Activated CD4-positive, alpha-beta memory T cell treated with anti-CD3 and anti-CD28 coated beads for 36 hours (primary cell): ENCODE measurements at regions of chr2 and their contacts with region 1.

Region 1: DNA sequence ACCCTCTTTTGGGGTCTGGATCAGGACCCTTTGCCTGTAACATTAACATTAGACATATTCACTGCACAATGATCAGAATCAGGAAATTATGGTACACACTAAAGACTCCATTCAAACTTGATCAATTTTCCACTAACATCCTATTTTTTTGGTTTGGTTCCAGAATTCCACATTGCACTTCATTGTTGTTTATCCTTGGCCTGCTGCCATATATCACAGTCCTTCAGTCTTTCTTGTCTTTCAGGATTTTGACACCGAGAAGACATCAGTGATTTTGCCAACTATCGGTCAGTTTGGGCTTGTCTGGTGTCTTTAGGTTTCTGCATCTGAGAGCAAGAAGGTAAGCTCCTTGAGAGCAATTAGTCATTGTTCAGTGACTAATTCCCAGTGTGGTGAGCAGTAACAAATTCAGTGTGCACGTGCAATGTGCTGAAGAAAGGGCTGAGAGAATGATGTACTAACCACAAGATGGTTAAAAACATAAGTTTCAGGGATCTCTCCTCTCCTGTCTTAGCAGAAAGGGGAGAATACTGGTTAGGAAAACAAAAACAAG is 23.5 kb downstream of the MARCHF4 start:
- DNase-seq: peak; percentile 52
- H3K4me3 Mint-ChIP-seq: no peak overlapping the region
- H3K27ac Mint-ChIP-seq: peak overlapping the region; percentile 36
- H3K4me1 Mint-ChIP-seq: peaks cover 66% of the 10 kb centered on the region
- H3K27me3 Mint-ChIP-seq: no peaks in the 10 kb centered on the region

Region 2: DNA sequence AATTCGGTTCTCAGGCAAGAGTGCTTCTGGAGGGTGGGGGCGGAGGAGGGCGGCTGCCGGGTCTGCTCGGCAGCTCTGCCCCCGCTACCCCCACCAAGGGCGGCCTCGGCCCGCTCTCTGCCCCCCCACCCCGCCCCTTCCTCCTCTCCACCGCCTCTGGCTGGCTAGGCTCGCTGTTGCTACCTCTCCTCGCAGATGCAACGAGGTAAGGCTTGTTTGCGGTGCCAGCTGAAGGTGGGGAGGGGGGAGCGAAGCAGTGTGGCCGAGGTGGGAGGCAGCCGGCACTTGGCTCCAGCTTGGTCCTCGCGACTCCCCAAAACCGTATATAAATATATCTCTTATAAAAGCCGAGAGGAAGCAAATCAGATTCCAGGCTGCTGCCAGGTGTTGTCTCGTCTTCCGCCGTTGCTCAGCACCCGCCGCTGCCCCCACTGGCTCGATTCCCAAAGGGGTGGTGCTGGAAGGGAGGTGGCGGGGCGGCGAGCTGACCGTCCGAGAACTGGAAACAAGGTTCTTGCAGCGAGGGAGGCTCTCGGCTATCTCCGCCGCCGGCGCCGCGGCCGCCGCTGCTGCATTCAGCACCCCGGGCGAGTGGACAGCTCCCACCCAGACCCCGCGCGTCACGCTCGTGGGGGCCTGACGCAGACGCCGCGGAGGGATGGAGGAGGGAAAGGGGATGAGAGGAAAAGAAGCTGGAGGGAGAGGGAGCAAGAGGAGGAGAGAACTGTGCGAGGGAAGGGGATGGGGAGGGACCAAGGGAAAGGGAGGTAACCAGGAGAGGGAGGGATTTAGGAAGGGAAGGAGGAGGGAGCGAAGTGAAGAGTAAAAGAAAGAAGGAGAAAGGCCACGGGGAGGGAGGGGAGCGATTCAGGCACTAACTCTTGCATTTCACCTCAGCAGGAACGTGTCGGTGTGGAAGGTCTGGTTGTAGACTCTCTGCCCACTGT is 23.2 kb after region 1 on chr2 and contains the start of gene MARCHF4:
- CTCF ChIA-PET with region 1: interaction called, 4 read pairs
- POLR2A ChIA-PET with region 1: no interaction called
- intact Hi-C with region 1: loop called (anchors 2 kb)
- DNase-seq: peak; percentile 75
- H3K4me3 Mint-ChIP-seq: no peak within 1 kb of the TSS
- H3K27ac Mint-ChIP-seq: no peak within 1 kb of the TSS
- H3K4me1 Mint-ChIP-seq: peaks cover 11% of the 10 kb centered on the region
- H3K27me3 Mint-ChIP-seq: peaks cover 48% of the 10 kb centered on the region
- total RNA-seq, gene MARCHF4: not detected

Region 3: DNA sequence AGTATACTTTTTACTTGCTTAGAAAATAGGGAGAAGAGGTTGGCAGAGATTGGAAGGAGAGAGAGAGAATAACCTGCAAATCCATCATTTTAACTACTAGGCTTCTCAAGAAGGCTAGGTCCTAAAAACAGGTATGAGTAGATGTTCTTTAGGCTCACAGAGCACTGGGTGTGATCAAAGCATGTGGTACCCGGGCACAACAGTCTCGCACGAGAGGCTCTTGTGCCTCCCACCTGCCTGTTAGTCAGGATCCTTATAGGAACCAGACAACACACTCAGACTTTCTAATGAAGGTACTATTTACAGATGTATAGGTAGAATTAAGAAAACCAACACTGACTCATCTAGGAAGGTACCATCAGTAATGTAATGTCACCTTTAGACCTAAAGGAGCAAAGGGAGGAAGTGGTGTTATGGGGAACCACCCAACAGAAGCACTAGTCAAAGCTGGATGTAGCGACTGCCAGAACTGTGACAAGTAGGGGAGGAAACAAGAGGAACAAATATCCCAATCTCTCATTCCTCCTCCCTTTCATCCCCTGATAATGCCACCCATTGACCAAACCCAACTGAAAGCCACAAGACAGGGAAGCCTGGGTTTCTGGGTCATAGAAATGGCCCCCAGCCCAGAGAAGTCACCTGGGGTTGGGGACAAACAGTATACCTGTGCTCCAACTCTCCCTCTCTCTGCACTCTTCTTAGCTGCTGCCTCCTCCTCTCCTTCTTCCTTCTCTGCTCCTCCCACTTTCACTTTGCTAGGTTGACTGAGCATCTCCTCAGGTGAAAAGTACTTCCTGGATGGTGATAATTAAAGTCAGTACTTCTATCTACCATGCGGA is 39.4 kb after region 1 on chr2:
- CTCF ChIA-PET with region 1: no interaction called
- POLR2A ChIA-PET with region 1: no interaction called
- intact Hi-C with region 1: loop called (anchors 1 kb)
- DNase-seq: peak; percentile 52
- H3K4me3 Mint-ChIP-seq: no peak overlapping the region
- H3K27ac Mint-ChIP-seq: peak overlapping the region; percentile 40
- H3K4me1 Mint-ChIP-seq: peaks cover 16% of the 10 kb centered on the region
- H3K27me3 Mint-ChIP-seq: no peaks in the 10 kb centered on the region

Region 4: DNA sequence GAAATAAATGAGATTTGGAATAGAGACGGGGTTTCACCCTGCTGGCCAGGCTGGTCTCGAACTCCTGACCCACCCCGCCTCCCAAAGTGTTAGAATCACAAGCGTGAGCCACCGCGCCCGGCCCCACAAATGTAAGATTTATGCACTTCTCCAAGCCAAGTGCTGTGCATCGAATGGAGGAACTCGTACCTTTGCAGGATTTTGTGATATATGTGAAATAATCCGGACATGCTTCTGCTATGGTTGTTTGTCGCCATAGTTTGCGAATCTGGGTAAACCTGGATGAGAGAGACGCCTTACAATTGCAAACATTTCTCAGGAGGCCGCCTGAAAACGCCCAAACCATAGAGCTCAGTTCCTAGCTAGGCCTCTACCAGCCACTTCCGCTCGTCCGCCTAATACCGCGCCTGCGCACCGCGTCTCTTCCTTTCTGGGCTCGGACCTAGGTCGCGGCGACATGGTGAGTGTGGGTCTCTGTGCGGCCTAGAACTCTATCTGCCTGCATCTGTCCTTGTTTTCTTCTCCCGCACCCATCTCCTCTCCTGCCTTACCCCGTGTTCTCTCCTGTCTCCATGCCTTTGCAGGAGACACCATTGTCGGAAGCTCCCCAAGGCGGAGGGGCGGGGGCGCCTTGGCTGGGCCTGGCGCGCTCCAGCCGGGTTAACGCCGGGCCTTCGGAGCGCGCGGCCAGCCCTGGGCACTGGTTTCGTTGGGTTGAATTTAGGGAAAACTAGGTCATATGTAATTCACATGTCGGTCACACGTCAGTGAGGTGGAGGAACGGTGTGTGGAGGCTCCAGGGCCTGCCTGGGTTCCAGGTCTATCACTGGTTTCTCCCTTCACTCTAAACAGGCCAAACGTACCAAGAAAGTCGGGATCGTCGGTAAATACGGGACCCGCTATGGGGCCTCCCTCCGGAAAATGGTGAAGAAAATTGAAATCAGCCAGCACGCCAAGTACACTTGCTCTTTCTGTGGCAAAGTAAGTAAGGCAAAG is 149.9 kb after region 1 on chr2 and contains the start of gene RPL37A:
- CTCF ChIA-PET with region 1: no interaction called
- POLR2A ChIA-PET with region 1: interaction called, 3 read pairs
- intact Hi-C with region 1: loop called (anchors 2 kb)
- DNase-seq: peak; percentile 93
- H3K4me3 Mint-ChIP-seq: peak within 1 kb of the TSS; percentile 97
- H3K27ac Mint-ChIP-seq: peak within 1 kb of the TSS; percentile 99
- H3K4me1 Mint-ChIP-seq: peaks cover 45% of the 10 kb centered on the region
- H3K27me3 Mint-ChIP-seq: no peaks in the 10 kb centered on the region
- total RNA-seq, gene RPL37A: 4,165 to 4,237 TPM

Region 5: GRCh38 chr2:217166241-217166850 is 817.5 kb after region 1 on chr2:
- CTCF ChIA-PET with region 1: no interaction called
- POLR2A ChIA-PET with region 1: no interaction called
- intact Hi-C with region 1: no loop called
- DNase-seq: no peak
- H3K4me3 Mint-ChIP-seq: no peak overlapping the region
- H3K27ac Mint-ChIP-seq: no peak overlapping the region
- H3K4me1 Mint-ChIP-seq: peaks cover 8% of the 10 kb centered on the region
- H3K27me3 Mint-ChIP-seq: peaks cover 13% of the 10 kb centered on the region